Gastrocnemius medialis (tissue), 4 donors: ENCODE measurements at regions of chr1 and their contacts with region 1.

Region 1: DNA sequence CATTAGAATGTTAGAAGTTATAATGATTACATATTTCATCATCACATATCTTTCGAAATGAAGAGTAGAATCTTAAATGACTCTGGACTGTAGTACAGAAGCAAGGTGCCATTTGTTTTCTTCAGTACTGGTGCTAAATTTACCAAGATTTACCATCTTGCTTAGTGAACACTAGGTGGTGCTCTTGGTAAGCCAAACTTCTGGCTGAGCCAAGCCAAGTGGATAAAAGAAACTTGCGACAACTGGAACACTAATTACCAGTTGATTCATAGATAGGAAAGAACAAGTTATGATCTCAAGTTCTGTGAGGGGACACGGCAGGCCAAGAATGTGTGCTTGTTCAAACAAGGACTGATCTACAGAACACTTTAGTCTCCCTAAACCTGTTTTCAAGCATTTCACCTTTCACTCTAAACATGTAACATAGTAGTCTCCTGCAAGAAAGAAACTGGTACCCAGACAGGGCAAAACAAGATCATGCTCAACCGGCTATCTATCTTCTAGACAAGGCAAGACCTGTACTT is 19.8 kb downstream of the SPRTN start:
- DNase-seq: peak; percentile 63 to 68
- ATAC-seq: peak; percentile 75 to 78
- H3K4me3 ChIP-seq: peak overlapping the region in 1 of 4 donors; percentile 10
- H3K27ac ChIP-seq: peak overlapping the region; percentile 76 to 87 (median 82)
- H3K4me1 ChIP-seq: peaks cover 28 to 34% of the 10 kb centered on the region in 2 donors
- H3K27me3 ChIP-seq: no peaks in the 10 kb centered on the region
- CTCF ChIP-seq: peak; percentile 75 to 85 (median 81)
- POLR2A ChIP-seq: peak in 1 of 2 donors; percentile 43

Region 2: GRCh38 chr1:231278100-231278790 is 79.6 kb before region 1 on chr1:
- in situ Hi-C with region 1: no loop called
- intact Hi-C with region 1: no loop called
- DNase-seq: peak; percentile 94 to 95
- ATAC-seq: peak; percentile 96
- H3K4me3 ChIP-seq: no peak overlapping the region
- H3K27ac ChIP-seq: peak overlapping the region; percentile 89 to 96 (median 92)
- H3K4me1 ChIP-seq: peaks cover 18 to 28% of the 10 kb centered on the region in 2 donors
- H3K27me3 ChIP-seq: no peaks in the 10 kb centered on the region
- CTCF ChIP-seq: no peak
- POLR2A ChIP-seq: peak; percentile 42 to 62

Region 3: GRCh38 chr1:231337472-231338269 is 20.2 kb before region 1 on chr1 and contains the start of gene EXOC8:
- in situ Hi-C with region 1: no loop called
- intact Hi-C with region 1: loop called (anchors 2 kb)
- DNase-seq: peak; percentile 91 to 94
- ATAC-seq: peak; percentile 80 to 88
- H3K4me3 ChIP-seq: peak within 1 kb of the TSS; percentile 75 to 91 (median 77)
- H3K27ac ChIP-seq: peak within 1 kb of the TSS; percentile 88 to 92 (median 90)
- H3K4me1 ChIP-seq: peaks cover 40% of the 10 kb centered on the region in 2 donors
- H3K27me3 ChIP-seq: no peaks in the 10 kb centered on the region
- CTCF ChIP-seq: no peak
- POLR2A ChIP-seq: peak; percentile 90 to 96
- total RNA-seq, gene EXOC8: 25.4 to 50.9 (median 38.2) TPM

Region 4: GRCh38 chr1:231407547-231408396 is 49.9 kb after region 1 on chr1:
- in situ Hi-C with region 1: loop called in 1 of 4 experiments (anchors 10 kb)
- intact Hi-C with region 1: loop called (anchors 2 kb)
- DNase-seq: no peak
- ATAC-seq: peak in 1 of 2 donors; percentile 25
- H3K4me3 ChIP-seq: peak overlapping the region; percentile 29 to 41 (median 37)
- H3K27ac ChIP-seq: peak overlapping the region; percentile 97 to 98 (median 98)
- H3K4me1 ChIP-seq: peaks cover 77 to 86% of the 10 kb centered on the region in 2 donors
- H3K27me3 ChIP-seq: no peaks in the 10 kb centered on the region
- CTCF ChIP-seq: no peak
- POLR2A ChIP-seq: peak in 1 of 2 donors; percentile 18

Region 5: DNA sequence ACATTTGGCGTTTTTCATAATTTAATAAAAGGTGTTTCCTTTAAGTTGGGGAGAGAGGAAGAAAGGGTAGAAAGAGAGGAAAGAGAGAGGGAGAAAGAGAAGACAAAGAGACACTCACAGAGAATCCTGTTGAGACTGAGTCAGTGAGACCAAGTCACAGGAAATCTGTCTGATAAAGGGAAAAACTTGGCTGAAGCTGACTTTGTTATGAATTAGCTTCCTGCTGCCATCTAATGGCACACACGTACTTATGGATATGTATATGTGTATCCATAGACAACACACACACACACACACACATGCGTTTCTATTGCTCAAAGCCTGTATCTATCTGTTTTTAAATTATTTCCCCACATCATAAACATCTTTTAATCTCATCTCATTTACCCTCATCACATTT is 226.2 kb after region 1 on chr1:
- in situ Hi-C with region 1: loop called in 2 of 4 experiments (anchors 5 kb)
- intact Hi-C with region 1: no loop called
- DNase-seq: no peak
- ATAC-seq: peak; percentile 45 to 50
- H3K4me3 ChIP-seq: no peak overlapping the region
- H3K27ac ChIP-seq: peak overlapping the region in 1 of 4 donors; percentile 1
- H3K4me1 ChIP-seq: no peaks in the 10 kb centered on the region
- H3K27me3 ChIP-seq: no peaks in the 10 kb centered on the region
- CTCF ChIP-seq: no peak
- POLR2A ChIP-seq: no peak

Region 6: DNA sequence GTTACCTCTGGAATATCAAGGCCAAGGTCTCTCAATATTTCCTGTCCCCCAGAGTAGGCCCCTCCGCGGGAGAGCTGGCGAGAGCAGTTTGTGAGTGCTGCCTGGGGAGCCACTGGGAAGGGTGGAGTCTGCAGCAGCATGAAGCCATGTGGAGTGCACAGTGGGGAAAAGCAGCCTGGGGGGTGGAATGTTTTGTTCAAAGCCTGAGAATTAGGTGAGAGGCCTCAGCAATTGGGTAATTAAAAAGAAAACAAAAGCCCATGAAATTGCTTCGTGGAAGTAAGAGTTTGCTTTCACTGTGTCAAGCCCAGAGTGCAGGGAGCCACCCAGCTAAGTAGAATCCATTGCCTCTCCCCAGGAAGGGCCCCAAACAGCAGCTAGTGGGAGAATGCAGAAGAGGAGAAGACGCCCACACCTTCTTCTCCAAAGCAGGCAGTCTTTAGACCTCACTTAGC is 238.5 kb after region 1 on chr1:
- in situ Hi-C with region 1: loop called in 2 of 4 experiments (anchors 5 to 10 kb)
- intact Hi-C with region 1: no loop called
- DNase-seq: no peak
- ATAC-seq: no peak
- H3K4me3 ChIP-seq: no peak overlapping the region
- H3K27ac ChIP-seq: peak overlapping the region in 2 of 4 donors; percentile 18 to 50
- H3K4me1 ChIP-seq: peaks cover 0 to 6% of the 10 kb centered on the region in 2 donors
- H3K27me3 ChIP-seq: no peaks in the 10 kb centered on the region
- CTCF ChIP-seq: no peak
- POLR2A ChIP-seq: no peak